ENCODE measurements at regions of chr2 and their contacts with region 1.

Region 1: DNA sequence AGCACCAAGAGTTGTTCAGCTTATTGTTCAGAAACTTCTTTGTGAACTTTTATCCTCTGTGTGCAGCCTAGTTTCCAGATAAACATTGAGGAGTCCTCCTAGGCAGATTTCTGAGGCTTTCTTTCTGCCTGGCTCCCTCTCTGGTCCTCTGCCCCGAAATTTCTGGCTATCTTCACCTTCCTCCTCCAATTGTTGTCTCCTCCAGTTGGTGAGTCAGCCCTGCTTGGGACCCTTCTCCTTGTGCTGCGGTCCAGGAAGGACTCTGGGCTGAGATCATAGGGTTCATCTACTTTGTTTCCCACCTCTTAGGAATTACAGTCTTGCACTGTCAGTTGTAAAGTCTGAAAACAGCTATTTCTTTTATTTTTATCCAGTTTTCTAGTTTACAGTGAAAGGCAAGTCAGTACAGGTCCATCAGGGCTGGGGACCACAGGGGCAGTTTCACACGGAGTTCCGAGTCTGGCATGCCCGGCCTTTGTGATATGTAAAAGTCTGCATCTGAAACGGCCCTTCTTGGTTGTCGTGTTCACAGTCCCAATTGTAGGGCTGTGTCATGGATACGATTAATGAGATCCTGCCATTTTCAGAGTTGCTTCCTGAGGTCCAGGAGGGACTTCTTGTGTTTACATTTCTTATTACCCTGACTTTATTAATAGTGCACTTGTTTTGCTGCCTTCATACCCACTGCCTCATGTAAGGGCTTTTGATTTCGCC is 100.8 kb downstream of the SMC6 start:
- DNase-seq: no peak
- ATAC-seq: no peak
- H3K4me3 ChIP-seq: no peak overlapping the region
- H3K27ac ChIP-seq: no peak overlapping the region
- H3K4me1 ChIP-seq: no peaks in the 10 kb centered on the region
- H3K27me3 ChIP-seq: no peaks in the 10 kb centered on the region
- CTCF ChIP-seq: no peak

Region 2: GRCh38 chr2:16142383-16143361 is 1510.2 kb before region 1 on chr2:
- intact Hi-C with region 1: no loop called
- DNase-seq: no peak
- ATAC-seq: peak in 2 of 4 donors; percentile 33 to 43
- H3K4me3 ChIP-seq: no peak overlapping the region
- H3K27ac ChIP-seq: no peak overlapping the region
- H3K4me1 ChIP-seq: no peaks in the 10 kb centered on the region
- H3K27me3 ChIP-seq: no peaks in the 10 kb centered on the region
- CTCF ChIP-seq: no peak

Region 3: GRCh38 chr2:17578466-17578928 is 74.3 kb before region 1 on chr2:
- intact Hi-C with region 1: no loop called
- DNase-seq: no peak
- ATAC-seq: no peak
- H3K4me3 ChIP-seq: no peak overlapping the region
- H3K27ac ChIP-seq: no peak overlapping the region
- H3K4me1 ChIP-seq: no peaks in the 10 kb centered on the region
- H3K27me3 ChIP-seq: no peaks in the 10 kb centered on the region
- CTCF ChIP-seq: no peak

Region 4: GRCh38 chr2:17672583-17673317 is 19.9 kb after region 1 on chr2:
- intact Hi-C with region 1: loop called in 1 of 2 experiments (anchors 2 kb)
- DNase-seq: no peak
- ATAC-seq: no peak
- H3K4me3 ChIP-seq: no peak overlapping the region
- H3K27ac ChIP-seq: no peak overlapping the region
- H3K4me1 ChIP-seq: no peaks in the 10 kb centered on the region
- H3K27me3 ChIP-seq: no peaks in the 10 kb centered on the region
- CTCF ChIP-seq: no peak